GM12878 (cell line): ENCODE measurements at regions of chr2 and their contacts with region 1.

Region 1: DNA sequence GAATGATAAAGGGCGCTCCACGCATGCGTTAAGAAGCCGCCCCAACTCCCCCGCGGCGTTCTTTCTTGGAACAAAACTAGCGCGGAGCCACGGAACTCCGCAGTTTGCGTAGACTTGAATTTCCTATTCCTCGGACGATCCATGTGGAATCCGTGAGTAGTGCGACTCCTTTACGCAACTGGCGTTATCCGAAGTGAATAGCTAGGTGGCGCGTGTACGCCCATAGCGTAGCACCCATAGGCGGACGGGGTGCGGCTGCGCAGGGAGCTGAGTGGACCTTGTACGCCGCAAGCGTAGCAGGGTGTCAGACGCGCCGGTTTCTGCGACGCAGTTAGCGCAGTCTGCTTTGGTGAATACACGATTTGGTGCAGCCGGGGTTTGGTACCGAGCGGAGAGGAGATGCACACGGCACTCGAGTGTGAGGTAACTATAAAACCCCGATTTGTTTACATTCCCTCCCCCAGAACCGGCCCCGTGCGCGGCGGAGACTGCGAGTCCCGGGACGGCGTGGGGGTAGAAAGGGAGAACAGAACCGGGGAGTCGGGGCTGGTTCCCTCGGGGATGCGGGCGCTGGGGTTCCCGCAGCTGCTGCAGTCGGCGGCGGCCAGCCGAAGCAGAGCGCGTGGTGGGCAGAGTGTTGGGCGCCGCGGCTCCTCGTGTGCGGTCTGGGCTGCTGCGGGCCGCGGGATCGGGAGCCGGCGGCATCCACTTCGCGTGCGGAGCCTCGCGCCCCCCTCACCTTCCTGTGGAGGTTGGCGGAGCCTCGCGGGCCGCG is at the start of gene SLC39A10:
- DNase-seq: peak; percentile 93
- ATAC-seq: peak; percentile 78
- H3K4me3 ChIP-seq: peak within 1 kb of the TSS; percentile 98
- H3K27ac ChIP-seq: peak within 1 kb of the TSS; percentile 96
- H3K4me1 ChIP-seq: no peaks in the 10 kb centered on the region
- H3K27me3 ChIP-seq: no peaks in the 10 kb centered on the region
- CTCF ChIP-seq: peak in 1 of 3 experiments; percentile 25; a peak in 1 of 6 replicates
- EP300 ChIP-seq: 0 out of 4 replicates have a peak, but pooled peaks of 1 of the 2 experiments have one; percentile 18
- POLR2A ChIP-seq: peak; percentile 98
- RAD21 ChIP-seq: no peak
- polyA plus RNA-seq, gene SLC39A10: 2.0 to 4.9 TPM

Region 2: DNA sequence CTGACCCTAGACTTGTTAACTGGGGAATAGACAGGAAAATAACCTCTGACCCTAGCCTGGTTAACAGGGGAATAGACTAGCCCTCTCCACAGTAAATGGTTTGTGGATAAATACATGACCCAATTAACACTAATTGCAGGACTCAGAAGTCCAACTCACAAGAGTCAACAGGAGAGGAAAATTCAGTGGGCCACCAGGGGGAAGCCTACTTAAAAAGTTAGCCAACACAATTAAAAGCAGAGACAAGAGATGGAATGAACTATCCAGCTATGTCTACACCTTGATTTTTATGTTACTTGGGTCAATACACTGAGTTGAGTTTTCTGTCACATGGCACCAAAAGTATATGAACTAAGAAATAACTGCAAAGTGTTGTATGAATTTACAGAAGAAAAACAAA is 158.9 kb before region 1 on chr2:
- CTCF ChIA-PET with region 1: interaction called, 92 read pairs
- POLR2A ChIA-PET with region 1: interaction called, 4 read pairs
- RAD21 ChIA-PET with region 1: interaction called, 124 read pairs
- SMC1A ChIA-PET with region 1: interaction called, 83 read pairs
- in situ Hi-C with region 1: loop called (anchors 10 kb)
- intact Hi-C with region 1: loop called (anchors 1 kb)
- DNase-seq: no peak
- ATAC-seq: peak; percentile 78
- H3K4me3 ChIP-seq: no peak overlapping the region
- H3K27ac ChIP-seq: no peak overlapping the region
- H3K4me1 ChIP-seq: no peaks in the 10 kb centered on the region
- H3K27me3 ChIP-seq: no peaks in the 10 kb centered on the region
- CTCF ChIP-seq: peak; percentile 33 to 56 (median 44)
- EP300 ChIP-seq: no peak
- POLR2A ChIP-seq: no peak
- RAD21 ChIP-seq: peak; percentile 70

Region 3: GRCh38 chr2:195543902-195544894 is 112.8 kb before region 1 on chr2:
- CTCF ChIA-PET with region 1: interaction called, 5 read pairs
- POLR2A ChIA-PET with region 1: no interaction called
- RAD21 ChIA-PET with region 1: interaction called, 5 read pairs
- SMC1A ChIA-PET with region 1: interaction called, 149 read pairs
- in situ Hi-C with region 1: no loop called
- intact Hi-C with region 1: no loop called
- DNase-seq: no peak
- ATAC-seq: peak; percentile 94
- H3K4me3 ChIP-seq: no peak overlapping the region
- H3K27ac ChIP-seq: no peak overlapping the region
- H3K4me1 ChIP-seq: no peaks in the 10 kb centered on the region
- H3K27me3 ChIP-seq: no peaks in the 10 kb centered on the region
- CTCF ChIP-seq: no peak
- EP300 ChIP-seq: peak; percentile 25 to 56; a peak in 1 of 4 replicates
- POLR2A ChIP-seq: no peak
- RAD21 ChIP-seq: no peak

Region 4: DNA sequence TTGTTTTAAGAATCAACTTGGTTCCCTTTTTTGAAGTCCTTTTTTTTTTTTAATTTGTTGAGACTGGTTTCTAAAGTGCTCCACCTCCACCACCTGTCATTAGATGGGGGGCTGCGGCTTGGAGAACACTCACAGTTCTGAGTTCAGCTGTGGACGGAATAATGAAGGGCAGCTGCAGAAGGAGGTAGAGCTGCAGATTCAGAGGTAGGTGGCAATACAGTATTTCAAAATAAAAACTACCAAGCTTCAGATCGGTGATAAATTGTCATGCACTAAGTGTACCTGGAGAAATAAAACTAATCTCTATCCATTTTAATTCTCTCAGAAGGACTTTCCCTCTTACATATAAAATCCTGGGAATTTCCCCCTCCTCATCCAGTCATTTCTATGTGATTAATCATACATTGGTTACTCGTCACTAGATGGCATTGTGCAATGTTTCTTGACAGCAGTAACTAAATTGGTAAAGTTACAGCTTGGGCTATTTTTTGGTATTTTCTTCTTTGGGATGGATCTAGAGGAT is 81.1 kb before region 1 on chr2:
- CTCF ChIA-PET with region 1: interaction called, 221 read pairs
- POLR2A ChIA-PET with region 1: interaction called, 15 read pairs
- RAD21 ChIA-PET with region 1: interaction called, 264 read pairs
- SMC1A ChIA-PET with region 1: interaction called, 244 read pairs
- in situ Hi-C with region 1: no loop called
- intact Hi-C with region 1: loop called (anchors 1 kb)
- DNase-seq: no peak
- ATAC-seq: peak; percentile 87
- H3K4me3 ChIP-seq: no peak overlapping the region
- H3K27ac ChIP-seq: no peak overlapping the region
- H3K4me1 ChIP-seq: no peaks in the 10 kb centered on the region; the same call in 1 of the 2 replicates
- H3K27me3 ChIP-seq: no peaks in the 10 kb centered on the region
- CTCF ChIP-seq: peak in 2 of 3 experiments; percentile 12 to 60; a peak in 3 of 6 replicates
- EP300 ChIP-seq: no peak
- POLR2A ChIP-seq: no peak
- RAD21 ChIP-seq: peak; percentile 54

Region 5: GRCh38 chr2:195687320-195688086 is 30.5 kb after region 1 on chr2:
- CTCF ChIA-PET with region 1: interaction called, 5 read pairs
- POLR2A ChIA-PET with region 1: no interaction called
- RAD21 ChIA-PET with region 1: interaction called, 11 read pairs
- SMC1A ChIA-PET with region 1: interaction called, 15 read pairs
- in situ Hi-C with region 1: no loop called
- intact Hi-C with region 1: no loop called
- DNase-seq: peak; percentile 30
- ATAC-seq: peak; percentile 75
- H3K4me3 ChIP-seq: no peak overlapping the region
- H3K27ac ChIP-seq: no peak overlapping the region
- H3K4me1 ChIP-seq: no peaks in the 10 kb centered on the region
- H3K27me3 ChIP-seq: no peaks in the 10 kb centered on the region
- CTCF ChIP-seq: no peak
- EP300 ChIP-seq: no peak
- POLR2A ChIP-seq: no peak
- RAD21 ChIP-seq: no peak

Region 6: GRCh38 chr2:195912079-195912478 is 255.0 kb after region 1 on chr2:
- CTCF ChIA-PET with region 1: no interaction called
- POLR2A ChIA-PET with region 1: no interaction called
- RAD21 ChIA-PET with region 1: no interaction called
- SMC1A ChIA-PET with region 1: no interaction called
- in situ Hi-C with region 1: no loop called
- intact Hi-C with region 1: no loop called
- DNase-seq: no peak
- ATAC-seq: no peak
- H3K4me3 ChIP-seq: no peak overlapping the region
- H3K27ac ChIP-seq: no peak overlapping the region
- H3K4me1 ChIP-seq: no peaks in the 10 kb centered on the region
- H3K27me3 ChIP-seq: no peaks in the 10 kb centered on the region
- CTCF ChIP-seq: no peak
- EP300 ChIP-seq: no peak
- POLR2A ChIP-seq: no peak
- RAD21 ChIP-seq: no peak

Region 7: DNA sequence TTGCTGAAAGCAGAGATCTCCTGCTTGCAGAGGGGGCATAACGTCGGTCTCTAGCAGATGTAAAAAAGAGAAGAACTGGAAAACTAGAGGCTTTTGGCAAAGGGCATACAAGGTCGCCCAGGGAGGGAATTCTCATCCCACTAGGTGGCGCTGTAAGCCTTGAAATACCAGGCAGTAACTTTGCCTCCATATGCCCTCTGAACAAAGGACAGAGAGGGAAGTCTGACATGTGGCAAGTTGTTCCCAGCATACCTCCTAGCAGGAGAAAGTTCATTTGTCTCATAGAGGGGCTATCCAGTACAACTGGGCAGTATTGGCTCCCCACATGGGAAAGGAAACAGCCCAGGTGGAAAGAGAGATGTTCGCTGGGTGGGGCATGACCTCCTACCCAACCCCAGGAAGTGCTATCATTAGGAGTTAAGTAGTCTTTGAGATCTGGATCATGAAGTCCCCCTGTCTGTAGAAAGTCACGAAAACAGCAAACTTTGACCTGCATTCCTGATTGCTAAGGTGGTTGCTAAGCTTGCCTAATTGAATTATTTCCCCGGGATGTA is 474.4 kb after region 1 on chr2:
- CTCF ChIA-PET with region 1: no interaction called
- POLR2A ChIA-PET with region 1: no interaction called
- RAD21 ChIA-PET with region 1: no interaction called
- SMC1A ChIA-PET with region 1: no interaction called
- in situ Hi-C with region 1: no loop called
- intact Hi-C with region 1: no loop called
- DNase-seq: peak; percentile 47
- ATAC-seq: peak; percentile 74
- H3K4me3 ChIP-seq: no peak overlapping the region
- H3K27ac ChIP-seq: no peak overlapping the region
- H3K4me1 ChIP-seq: no peaks in the 10 kb centered on the region
- H3K27me3 ChIP-seq: no peaks in the 10 kb centered on the region
- CTCF ChIP-seq: peak; percentile 39 to 53 (median 49); a peak in 5 of 6 replicates
- EP300 ChIP-seq: no peak
- POLR2A ChIP-seq: no peak
- RAD21 ChIP-seq: peak; percentile 62

Region 8: GRCh38 chr2:196239622-196240587 is 582.9 kb after region 1 on chr2:
- CTCF ChIA-PET with region 1: no interaction called
- POLR2A ChIA-PET with region 1: no interaction called
- RAD21 ChIA-PET with region 1: no interaction called
- SMC1A ChIA-PET with region 1: no interaction called
- in situ Hi-C with region 1: no loop called
- intact Hi-C with region 1: loop called (anchors 10 kb)
- DNase-seq: peak; percentile 86
- ATAC-seq: peak; percentile 79
- H3K4me3 ChIP-seq: no peak overlapping the region
- H3K27ac ChIP-seq: peak overlapping the region; percentile 75
- H3K4me1 ChIP-seq: peaks cover 36% of the 10 kb centered on the region
- H3K27me3 ChIP-seq: no peaks in the 10 kb centered on the region
- CTCF ChIP-seq: 0 out of 6 replicates have a peak, but pooled peaks of 1 of the 3 experiments have one; percentile 3
- EP300 ChIP-seq: peak; percentile 74 to 85
- POLR2A ChIP-seq: no peak
- RAD21 ChIP-seq: 0 out of 2 replicates have a peak, but pooled peaks have one; percentile 19